AG04450 (cell line): ENCODE measurements at regions of chr1 and their contacts with region 1.

Region 1: DNA sequence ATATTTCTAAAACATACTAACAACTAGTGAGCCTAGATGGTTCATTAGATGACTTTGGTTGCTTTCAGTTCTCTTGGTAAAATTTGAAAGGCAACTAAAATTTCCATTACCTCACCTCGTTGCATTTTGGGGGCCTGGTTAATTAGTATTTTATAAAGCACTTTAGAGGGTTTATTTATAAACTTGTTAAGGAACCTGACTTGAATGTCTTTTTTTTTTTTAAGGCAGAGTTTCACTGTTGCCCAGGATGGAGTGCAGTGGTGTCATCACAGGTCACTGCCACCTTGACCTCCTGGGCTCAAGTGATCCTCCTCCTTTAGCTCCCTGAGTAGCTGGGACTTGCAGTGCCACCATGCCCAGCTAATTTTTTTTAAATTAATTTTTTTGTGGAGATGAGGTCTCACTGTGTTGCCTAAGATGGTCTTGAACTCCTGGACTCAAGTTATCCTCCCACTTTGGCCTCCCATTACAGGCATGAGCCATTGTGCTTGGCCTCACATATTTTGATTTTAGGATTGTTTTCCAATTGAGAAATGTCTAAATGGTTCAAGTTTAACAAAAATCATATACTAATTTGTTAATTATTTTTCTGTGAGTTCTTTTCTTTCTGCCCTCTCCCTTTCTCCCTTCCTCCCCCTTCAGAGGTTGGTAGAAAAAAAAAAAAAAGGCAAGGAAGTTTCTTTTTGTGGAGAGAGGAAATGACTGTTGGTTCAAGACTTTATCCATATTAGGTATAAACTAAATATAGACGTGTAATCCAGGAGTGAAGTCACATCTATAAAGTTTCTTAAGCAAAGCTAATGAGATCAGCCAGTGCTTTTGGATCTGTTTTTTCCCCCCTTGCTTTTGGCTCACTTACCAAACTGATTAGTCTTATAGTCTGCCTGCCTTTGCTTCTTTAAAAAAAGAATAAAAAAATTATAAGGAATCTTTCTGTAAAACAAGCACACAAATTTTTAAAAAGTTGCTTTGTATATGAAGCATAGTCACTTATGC is 24.7 kb downstream of the CLIC4 start:
- DNase-seq: peak; percentile 92
- H3K4me3 ChIP-seq: no peak overlapping the region
- H3K27ac ChIP-seq: peak overlapping the region; percentile 97
- H3K27me3 ChIP-seq: no peaks in the 10 kb centered on the region
- CTCF ChIP-seq: no peak

Region 2: GRCh38 chr1:24786191-24786590 is 16.2 kb after region 1 on chr1:
- CTCF ChIA-PET with region 1: interaction called, 10 read pairs
- POLR2A ChIA-PET with region 1: interaction called, 5 read pairs
- DNase-seq: no peak
- H3K4me3 ChIP-seq: no peak overlapping the region
- H3K27ac ChIP-seq: no peak overlapping the region
- H3K27me3 ChIP-seq: no peaks in the 10 kb centered on the region
- CTCF ChIP-seq: no peak